Heart right ventricle (tissue), 16 donors: ENCODE measurements at regions of chr12 and their contacts with region 1.

Region 1: GRCh38 chr12:50297027-50297426 is 13.7 kb upstream of the LIMA1 start:
- DNase-seq: no peak
- ATAC-seq: peak in 3 of 8 donors; percentile 22 to 65 (median 51)
- H3K4me3 ChIP-seq: no peak overlapping the region
- H3K27ac ChIP-seq: peak overlapping the region in 9 of 10 donors; percentile 5 to 73 (median 40)
- H3K4me1 ChIP-seq: peaks cover 0 to 31% (median 13%) of the 10 kb centered on the region in 9 donors
- H3K27me3 ChIP-seq: no peaks in the 10 kb centered on the region
- CTCF ChIP-seq: no peak

Region 2: DNA sequence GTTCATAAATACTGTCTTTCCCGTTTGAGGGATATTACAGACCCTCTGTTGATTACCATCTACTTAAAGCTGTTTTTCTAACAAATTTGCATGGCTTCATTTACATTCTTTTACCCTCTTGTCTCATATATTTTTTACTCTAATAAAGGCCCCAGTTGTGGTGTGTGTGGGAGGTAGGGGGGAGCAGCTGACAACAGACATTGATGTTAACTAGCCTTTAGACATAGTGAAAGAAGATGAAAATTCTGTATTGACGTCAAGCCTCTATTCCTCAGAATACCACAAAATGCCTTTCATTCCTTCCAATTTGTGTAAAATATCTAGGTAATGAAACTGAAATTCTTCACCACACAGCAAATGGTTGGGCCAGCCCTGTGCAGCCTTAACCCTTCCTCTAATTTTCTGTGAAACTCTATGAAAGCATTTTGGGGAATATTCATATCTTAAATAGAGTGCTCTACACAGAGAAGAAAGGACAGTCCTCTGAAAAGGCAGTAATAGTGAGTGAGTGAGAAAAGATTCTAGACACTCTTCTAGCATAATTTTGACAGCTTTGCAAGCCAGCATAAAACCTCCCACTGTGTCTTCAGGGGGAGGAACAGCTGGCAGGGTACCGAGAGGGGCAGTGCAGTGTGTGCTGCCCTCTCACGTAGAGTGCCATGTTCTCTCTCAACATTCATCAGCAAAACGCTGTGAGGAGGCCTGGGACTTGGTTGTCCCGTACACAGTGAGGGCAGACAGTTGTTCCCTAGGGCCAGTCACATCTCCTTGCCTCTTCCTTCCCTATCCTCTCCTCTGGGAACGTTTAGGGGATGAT is 109.7 kb before region 1 on chr12:
- intact Hi-C with region 1: loop called in 1 of 10 experiments (anchors 10 kb)
- DNase-seq: no peak
- ATAC-seq: peak in 4 of 8 donors; percentile 13 to 37 (median 24)
- H3K4me3 ChIP-seq: no peak overlapping the region
- H3K27ac ChIP-seq: peak overlapping the region in 7 of 10 donors; percentile 8 to 72 (median 12)
- H3K4me1 ChIP-seq: peaks cover 0 to 58% (median 50%) of the 10 kb centered on the region in 9 donors
- H3K27me3 ChIP-seq: no peaks in the 10 kb centered on the region
- CTCF ChIP-seq: no peak

Region 3: GRCh38 chr12:50234347-50234746 is 62.7 kb before region 1 on chr12:
- intact Hi-C with region 1: loop called in 1 of 10 experiments (anchors 10 kb)
- DNase-seq: no peak
- ATAC-seq: peak in 2 of 8 donors; percentile 17 to 48
- H3K4me3 ChIP-seq: no peak overlapping the region
- H3K27ac ChIP-seq: no peak overlapping the region
- H3K4me1 ChIP-seq: no peaks in the 10 kb centered on the region
- H3K27me3 ChIP-seq: no peaks in the 10 kb centered on the region
- CTCF ChIP-seq: no peak